HEK293 (cell line): ENCODE measurements at regions of chr21 and their contacts with region 1.

Region 1: DNA sequence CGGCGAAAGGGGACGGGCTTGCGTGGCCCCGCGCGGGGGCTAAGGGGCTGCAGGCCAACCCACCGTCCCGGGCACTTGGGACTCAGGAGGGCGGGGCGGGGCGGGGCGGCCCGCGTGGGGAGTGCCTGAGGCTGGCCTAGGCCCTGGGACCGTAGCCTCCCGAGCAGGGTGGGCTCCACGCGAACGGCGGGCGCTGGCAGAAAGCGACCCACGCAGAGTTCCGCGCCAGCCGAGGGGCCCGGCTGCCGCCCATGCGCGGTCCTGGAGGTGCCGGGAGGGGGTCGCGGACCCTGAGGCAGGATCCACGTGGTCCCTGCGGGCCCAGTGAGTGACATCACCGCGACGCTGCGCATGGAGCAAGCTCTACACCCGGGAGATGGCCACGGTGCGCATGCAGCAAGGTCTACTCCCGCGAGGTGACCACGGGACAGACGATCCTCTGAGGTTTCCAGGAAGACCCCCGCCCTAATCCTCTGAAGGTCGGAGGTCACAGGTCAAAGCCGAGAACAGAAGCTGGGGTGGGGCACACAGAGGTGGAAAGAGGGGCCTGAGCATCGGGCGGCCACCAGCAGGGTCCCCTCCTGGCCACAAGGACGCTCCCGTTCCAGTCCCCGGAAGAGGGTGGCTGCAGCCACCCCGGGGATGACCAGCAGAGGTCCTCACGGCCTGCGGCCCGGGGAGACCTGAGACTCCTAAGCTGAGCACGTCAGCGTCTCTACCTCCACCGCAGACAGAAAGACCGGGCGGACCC is 13.5 kb upstream of the SLC19A1 start:
- H3K4me3 ChIP-seq: peak overlapping the region; percentile 43
- H3K27ac ChIP-seq: peak overlapping the region; percentile 49; the same call in 1 of the 2 replicates
- H3K4me1 ChIP-seq: peaks cover 6% of the 10 kb centered on the region; the same call in 1 of the 2 replicates
- CTCF ChIP-seq: peak; percentile 99

Region 2: DNA sequence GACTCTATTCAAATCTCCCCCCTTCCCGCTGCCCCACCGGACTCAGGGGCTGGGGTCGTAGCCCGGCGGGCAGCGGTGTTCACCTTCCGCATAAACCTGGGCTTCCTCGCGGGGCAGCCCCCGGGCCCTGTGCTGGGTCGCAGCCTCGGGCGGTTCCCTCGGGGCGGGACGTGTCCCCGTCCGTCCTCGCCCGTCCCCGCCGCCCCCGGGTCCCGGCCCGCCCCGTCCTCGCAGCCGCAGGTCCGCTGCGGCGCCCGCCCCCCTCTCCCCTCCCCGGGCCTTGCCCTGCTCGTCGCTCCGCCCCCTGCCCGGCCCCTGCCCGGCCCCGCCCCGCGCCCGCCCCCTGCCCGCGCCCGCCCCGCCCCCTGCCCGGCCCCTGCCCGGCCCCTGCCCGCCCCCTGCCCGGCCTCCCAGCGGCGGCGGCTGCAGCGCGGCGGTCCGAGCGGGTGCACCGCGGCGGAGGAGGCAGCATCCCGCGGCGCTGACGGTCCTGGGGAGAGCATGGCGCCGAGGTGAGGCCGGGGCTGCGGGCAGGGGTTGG is 150.9 kb before region 1 on chr21 and contains the start of gene COL18A1:
- CTCF ChIA-PET with region 1: no interaction called
- POLR2A ChIA-PET with region 1: no interaction called
- H3K4me3 ChIP-seq: peak within 1 kb of the TSS; percentile 46
- H3K27ac ChIP-seq: no peak within 1 kb of the TSS; the same call in 1 of the 2 replicates
- H3K4me1 ChIP-seq: no peaks in the 10 kb centered on the region
- CTCF ChIP-seq: no peak

Region 3: DNA sequence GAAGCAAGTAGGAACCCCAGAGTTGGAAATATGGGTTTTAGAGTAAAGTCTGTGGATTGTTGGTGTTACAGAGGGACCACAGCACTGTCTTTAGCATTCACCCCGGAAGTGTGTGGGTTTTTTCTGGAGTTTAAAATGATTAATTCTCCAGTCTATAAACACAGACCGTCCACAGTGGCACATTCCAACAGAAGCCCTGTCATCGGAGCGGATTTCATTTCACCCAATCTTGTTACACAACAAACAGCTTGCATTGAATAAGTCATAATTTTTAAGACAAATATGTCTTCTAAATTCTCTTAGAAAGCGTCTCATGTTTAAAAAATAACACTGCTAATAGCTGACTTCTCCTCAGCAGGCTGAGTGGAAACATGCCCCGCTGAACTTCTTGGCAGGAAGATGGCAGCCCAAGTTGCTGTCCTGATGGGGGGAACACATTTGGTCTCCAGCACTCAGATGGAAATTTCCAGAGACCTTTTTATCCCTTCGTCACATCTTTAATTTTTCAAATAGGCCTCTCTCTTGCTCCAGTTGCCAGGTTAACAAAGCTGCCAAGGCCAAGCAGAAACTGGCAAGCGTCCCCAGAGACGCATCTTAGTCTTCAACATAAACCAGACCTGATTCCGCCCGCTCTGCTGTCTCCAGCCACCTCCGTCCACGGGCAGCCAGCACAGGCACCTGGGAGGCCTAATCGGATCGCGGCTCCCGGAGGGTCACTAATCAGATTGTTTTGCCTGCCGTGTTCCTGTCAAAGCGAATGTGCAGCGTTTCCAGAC is 15.3 kb after region 1 on chr21:
- CTCF ChIA-PET with region 1: interaction called, 34 read pairs
- POLR2A ChIA-PET with region 1: no interaction called
- H3K4me3 ChIP-seq: no peak overlapping the region
- H3K27ac ChIP-seq: no peak overlapping the region
- H3K4me1 ChIP-seq: no peaks in the 10 kb centered on the region
- CTCF ChIP-seq: no peak

Region 4: DNA sequence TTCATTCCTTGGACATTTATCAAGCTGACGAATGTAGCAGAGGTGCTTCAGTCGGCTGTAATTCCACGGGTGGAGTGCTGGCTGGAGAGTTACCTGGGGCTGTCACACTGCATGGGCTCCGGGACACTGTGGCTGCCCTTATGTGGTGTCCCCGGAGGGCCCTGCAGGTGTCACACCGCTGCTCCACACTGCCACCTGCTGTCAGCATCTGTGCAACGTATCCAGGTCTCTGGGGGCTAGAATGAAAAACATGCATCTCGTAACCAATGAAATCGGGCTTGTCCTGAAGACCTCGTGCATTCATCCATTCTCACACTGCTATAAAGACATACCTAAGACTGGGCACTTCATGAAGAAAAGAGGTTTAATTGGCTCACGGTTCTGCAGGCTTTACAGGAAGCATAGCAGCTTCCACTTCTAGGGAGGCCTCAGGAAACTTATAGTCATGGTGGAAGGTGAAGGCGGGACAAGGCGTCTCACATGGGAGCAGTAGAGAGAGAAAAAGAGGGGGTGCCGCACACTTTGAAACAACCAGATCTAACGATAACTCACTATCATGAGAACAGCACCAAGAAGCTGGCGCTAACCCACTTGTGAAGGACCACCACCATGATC is 41.1 kb after region 1 on chr21:
- CTCF ChIA-PET with region 1: interaction called, 70 read pairs
- POLR2A ChIA-PET with region 1: interaction called, 10 read pairs
- H3K4me3 ChIP-seq: no peak overlapping the region
- H3K27ac ChIP-seq: no peak overlapping the region
- H3K4me1 ChIP-seq: no peaks in the 10 kb centered on the region
- CTCF ChIP-seq: peak; percentile 95

Region 5: DNA sequence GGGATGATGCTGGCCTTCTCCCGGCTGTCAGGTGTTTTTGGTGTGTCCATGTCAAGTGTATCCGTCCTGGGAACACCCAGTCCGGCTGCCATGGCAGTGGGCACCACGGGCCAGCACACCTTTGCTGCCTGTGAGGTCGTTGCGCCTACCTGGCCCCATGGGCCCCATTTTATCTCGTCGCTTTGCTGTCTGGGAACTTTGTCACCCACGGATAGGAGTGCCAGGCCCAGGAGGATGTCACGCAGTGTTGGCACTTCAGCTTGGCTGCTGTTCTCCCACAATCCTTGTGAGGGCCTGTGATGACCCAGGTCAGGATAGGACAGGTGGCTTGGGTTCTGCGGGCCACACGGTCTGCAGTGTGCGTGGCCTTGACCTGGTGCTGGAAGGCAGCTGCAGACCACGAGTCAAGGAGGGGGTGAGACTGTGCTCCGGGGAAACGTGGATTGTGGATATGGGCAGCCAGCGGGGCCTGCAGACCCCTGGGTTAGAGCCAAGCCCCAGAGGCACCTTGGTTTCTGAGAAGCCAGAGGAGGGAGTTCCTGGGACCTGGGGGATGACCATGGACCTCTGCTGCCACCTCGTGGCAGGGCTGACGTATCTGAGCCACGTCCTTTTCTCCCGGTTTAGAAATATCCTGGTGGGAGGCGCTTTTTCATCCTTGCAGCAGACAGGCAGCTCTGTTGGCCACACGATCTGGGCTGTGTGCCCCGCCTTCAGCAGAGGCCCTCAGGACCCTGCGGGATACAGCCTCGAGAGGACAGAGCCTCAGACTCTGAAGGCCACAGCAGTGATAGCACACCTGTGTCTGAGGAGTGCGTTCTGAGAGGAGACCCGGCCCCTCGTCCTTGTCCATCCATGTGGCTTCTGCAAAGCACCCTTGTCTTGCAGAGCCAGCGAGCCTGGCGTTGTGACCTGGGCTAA is 264.7 kb after region 1 on chr21:
- CTCF ChIA-PET with region 1: interaction called, 41 read pairs
- POLR2A ChIA-PET with region 1: interaction called, 8 read pairs
- H3K4me3 ChIP-seq: no peak overlapping the region
- H3K27ac ChIP-seq: no peak overlapping the region
- H3K4me1 ChIP-seq: peaks cover 4% of the 10 kb centered on the region; the same call in 1 of the 2 replicates
- CTCF ChIP-seq: peak; percentile 96

Region 6: GRCh38 chr21:45880097-45881068 is 324.7 kb after region 1 on chr21:
- CTCF ChIA-PET with region 1: interaction called, 13 read pairs
- POLR2A ChIA-PET with region 1: no interaction called
- H3K4me3 ChIP-seq: no peak overlapping the region
- H3K27ac ChIP-seq: no peak overlapping the region
- H3K4me1 ChIP-seq: no peaks in the 10 kb centered on the region; the same call in 1 of the 2 replicates
- CTCF ChIP-seq: 0 out of 2 replicates have a peak, but pooled peaks have one; percentile 20